B cell (primary cell): ENCODE measurements at regions of chr14 and their contacts with region 1.

Region 1: GRCh38 chr14:68816262-68816942 is 23.5 kb upstream of the ZFP36L1 start:
- DNase-seq: peak; percentile 94
- ATAC-seq: peak; percentile 73
- H3K4me3 ChIP-seq: peak overlapping the region; percentile 51 to 80 (median 74)
- H3K4me3 Mint-ChIP-seq: peak overlapping the region; percentile 87
- H3K27ac ChIP-seq: peak overlapping the region; percentile 89 to 94
- H3K27ac Mint-ChIP-seq: peak overlapping the region; percentile 98
- H3K4me1 ChIP-seq: peaks cover 56 to 70% of the 10 kb centered on the region in 2 donors
- H3K4me1 Mint-ChIP-seq: peaks cover 82% of the 10 kb centered on the region
- H3K27me3 ChIP-seq: no peaks in the 10 kb centered on the region
- H3K27me3 Mint-ChIP-seq: no peaks in the 10 kb centered on the region
- CTCF ChIP-seq: peak; percentile 97

Region 2: GRCh38 chr14:67943947-67944346 is 872.5 kb before region 1 on chr14:
- CTCF ChIA-PET with region 1: interaction called, 132 read pairs
- POLR2A ChIA-PET with region 1: no interaction called
- intact Hi-C with region 1: loop called (anchors 1 kb)
- DNase-seq: peak; percentile 77
- ATAC-seq: peak; percentile 60
- H3K4me3 ChIP-seq: no peak overlapping the region
- H3K4me3 Mint-ChIP-seq: no peak overlapping the region
- H3K27ac ChIP-seq: no peak overlapping the region
- H3K27ac Mint-ChIP-seq: no peak overlapping the region
- H3K4me1 ChIP-seq: peaks cover 0 to 3% of the 10 kb centered on the region in 2 donors
- H3K4me1 Mint-ChIP-seq: peaks cover 5% of the 10 kb centered on the region
- H3K27me3 ChIP-seq: no peaks in the 10 kb centered on the region
- H3K27me3 Mint-ChIP-seq: no peaks in the 10 kb centered on the region
- CTCF ChIP-seq: peak; percentile 84

Region 3: GRCh38 chr14:68283378-68284123 is 532.9 kb before region 1 on chr14:
- CTCF ChIA-PET with region 1: interaction called, 15 read pairs
- POLR2A ChIA-PET with region 1: interaction called, 28 read pairs
- intact Hi-C with region 1: loop called (anchors 1 kb)
- DNase-seq: peak; percentile 87
- ATAC-seq: peak; percentile 69
- H3K4me3 ChIP-seq: peak overlapping the region in 3 of 5 experiments; percentile 5 to 31 (median 7)
- H3K4me3 Mint-ChIP-seq: peak overlapping the region; percentile 83
- H3K27ac ChIP-seq: peak overlapping the region; percentile 91 to 98
- H3K27ac Mint-ChIP-seq: peak overlapping the region; percentile 98
- H3K4me1 ChIP-seq: peaks cover 93 to 96% of the 10 kb centered on the region in 2 donors
- H3K4me1 Mint-ChIP-seq: peaks cover 95% of the 10 kb centered on the region
- H3K27me3 ChIP-seq: no peaks in the 10 kb centered on the region
- H3K27me3 Mint-ChIP-seq: no peaks in the 10 kb centered on the region
- CTCF ChIP-seq: no peak

Region 4: GRCh38 chr14:68408680-68409079 is 407.7 kb before region 1 on chr14:
- CTCF ChIA-PET with region 1: interaction called, 9 read pairs
- POLR2A ChIA-PET with region 1: no interaction called
- intact Hi-C with region 1: loop called (anchors 2 kb)
- DNase-seq: peak; percentile 62
- ATAC-seq: peak; percentile 46
- H3K4me3 ChIP-seq: no peak overlapping the region
- H3K4me3 Mint-ChIP-seq: no peak overlapping the region
- H3K27ac ChIP-seq: peak overlapping the region; percentile 30 to 60
- H3K27ac Mint-ChIP-seq: peak overlapping the region; percentile 84
- H3K4me1 ChIP-seq: peaks cover 57 to 60% of the 10 kb centered on the region in 2 donors
- H3K4me1 Mint-ChIP-seq: peaks cover 61% of the 10 kb centered on the region
- H3K27me3 ChIP-seq: no peaks in the 10 kb centered on the region
- H3K27me3 Mint-ChIP-seq: no peaks in the 10 kb centered on the region
- CTCF ChIP-seq: peak; percentile 24

Region 5: GRCh38 chr14:68741839-68742470 is 74.4 kb before region 1 on chr14:
- CTCF ChIA-PET with region 1: interaction called, 3 read pairs
- POLR2A ChIA-PET with region 1: no interaction called
- intact Hi-C with region 1: loop called (anchors 1 kb)
- DNase-seq: peak; percentile 92
- ATAC-seq: peak; percentile 92
- H3K4me3 ChIP-seq: no peak overlapping the region
- H3K4me3 Mint-ChIP-seq: peak overlapping the region; percentile 56
- H3K27ac ChIP-seq: peak overlapping the region; percentile 42 to 44
- H3K27ac Mint-ChIP-seq: peak overlapping the region; percentile 88
- H3K4me1 ChIP-seq: peaks cover 34 to 52% of the 10 kb centered on the region in 2 donors
- H3K4me1 Mint-ChIP-seq: peaks cover 55% of the 10 kb centered on the region
- H3K27me3 ChIP-seq: no peaks in the 10 kb centered on the region
- H3K27me3 Mint-ChIP-seq: no peaks in the 10 kb centered on the region
- CTCF ChIP-seq: no peak